Panc1 (cell line): ENCODE measurements at regions of chr9 and their contacts with region 1.

Region 1: GRCh38 chr9:94681508-94681907 is 42.2 kb upstream of the FBP1 start:
- DNase-seq: no peak
- ATAC-seq: peak; percentile 98
- H3K4me3 ChIP-seq: no peak overlapping the region
- H3K27ac ChIP-seq: peak overlapping the region; percentile 55; the same call in 1 of the 2 replicates
- H3K4me1 ChIP-seq: 0 out of 2 replicates have a peak, but pooled peaks cover 2% of the 10 kb centered on the region
- H3K27me3 ChIP-seq: no peaks in the 10 kb centered on the region
- CTCF ChIP-seq: peak; percentile 74

Region 2: DNA sequence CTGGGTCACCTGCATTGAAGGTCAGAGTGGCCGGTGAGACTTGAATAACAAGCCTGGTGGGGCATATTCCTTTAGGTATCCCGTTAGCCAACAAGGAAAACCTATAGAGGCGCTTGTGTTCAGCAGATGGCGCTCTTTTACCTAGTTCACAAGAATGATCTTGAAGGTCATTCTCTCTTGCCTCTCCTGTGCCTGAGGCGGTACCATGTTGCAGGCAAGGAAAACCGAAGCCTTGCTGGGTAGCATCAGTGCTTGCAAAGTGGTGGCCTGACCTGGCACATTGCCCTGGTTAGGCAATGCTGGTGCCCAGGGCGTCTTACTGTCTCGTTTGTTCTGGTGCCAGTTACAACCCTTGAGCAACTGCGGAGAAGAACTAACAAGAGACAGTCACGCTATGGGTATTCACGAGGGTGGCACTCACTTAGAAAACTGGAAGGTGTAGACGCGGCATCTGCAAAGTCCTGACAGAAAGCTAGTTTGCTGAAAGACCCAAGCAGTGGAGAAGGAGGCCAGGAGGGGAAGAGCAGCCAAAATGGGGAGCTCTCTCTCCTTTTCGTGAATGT is 101.7 kb after region 1 on chr9:
- CTCF ChIA-PET with region 1: no interaction called
- POLR2A ChIA-PET with region 1: interaction called, 3 read pairs
- in situ Hi-C with region 1: no loop called
- intact Hi-C with region 1: loop called (anchors 10 kb)
- DNase-seq: peak; percentile 64
- ATAC-seq: peak; percentile 99
- H3K4me3 ChIP-seq: no peak overlapping the region; a peak in 1 of 4 replicates
- H3K27ac ChIP-seq: peak overlapping the region; percentile 85
- H3K4me1 ChIP-seq: peaks cover 23% of the 10 kb centered on the region
- H3K27me3 ChIP-seq: no peaks in the 10 kb centered on the region
- CTCF ChIP-seq: peak; percentile 74

Region 3: DNA sequence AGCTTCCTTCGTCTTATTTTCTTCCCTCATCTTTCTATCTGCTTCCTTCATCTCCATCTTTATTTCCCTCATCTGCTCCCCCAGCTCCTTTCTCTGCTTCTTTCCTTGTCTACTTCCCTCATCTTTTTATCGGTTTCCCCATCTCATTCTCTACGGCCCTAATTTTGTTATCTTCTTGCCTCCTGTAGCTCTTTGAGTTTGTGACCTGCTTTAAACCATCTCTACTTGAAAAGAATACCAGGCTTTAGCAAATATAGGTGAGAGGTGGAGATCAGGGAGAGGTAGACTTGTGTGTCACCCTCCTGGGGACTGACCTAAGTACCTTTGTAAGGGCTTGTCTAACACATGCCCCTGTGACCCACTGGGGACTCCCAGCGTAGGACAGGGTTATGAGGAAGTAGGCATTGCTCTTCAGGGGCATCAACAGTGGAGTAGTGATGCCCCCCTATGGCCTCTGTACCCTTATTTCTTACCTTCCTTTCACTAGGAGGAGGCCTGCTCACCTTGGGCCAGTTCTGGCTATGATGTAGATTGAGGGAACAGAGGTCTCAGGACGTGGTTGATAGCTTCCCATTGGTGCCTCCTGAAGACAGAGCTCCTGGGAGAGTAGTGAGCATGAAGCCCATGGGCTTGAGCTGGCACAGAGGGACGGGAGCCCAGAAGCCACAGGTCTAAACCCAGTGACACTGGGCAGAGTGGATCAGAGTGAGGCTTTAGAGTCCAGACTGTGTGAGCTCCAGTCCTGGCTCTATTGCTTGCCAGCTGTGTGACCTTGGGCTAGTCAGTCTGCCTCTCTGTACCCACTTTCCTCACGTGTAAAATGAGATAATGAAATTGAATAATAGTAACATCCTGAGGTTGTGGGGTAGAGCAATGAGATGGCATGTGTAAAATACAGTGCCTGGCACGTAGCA is 236.6 kb after region 1 on chr9:
- CTCF ChIA-PET with region 1: interaction called, 10 read pairs
- POLR2A ChIA-PET with region 1: no interaction called
- in situ Hi-C with region 1: no loop called
- intact Hi-C with region 1: no loop called
- DNase-seq: no peak
- ATAC-seq: no peak
- H3K4me3 ChIP-seq: no peak overlapping the region
- H3K27ac ChIP-seq: peak overlapping the region; percentile 98
- H3K4me1 ChIP-seq: peaks cover 87% of the 10 kb centered on the region
- H3K27me3 ChIP-seq: no peaks in the 10 kb centered on the region
- CTCF ChIP-seq: no peak

Region 4: DNA sequence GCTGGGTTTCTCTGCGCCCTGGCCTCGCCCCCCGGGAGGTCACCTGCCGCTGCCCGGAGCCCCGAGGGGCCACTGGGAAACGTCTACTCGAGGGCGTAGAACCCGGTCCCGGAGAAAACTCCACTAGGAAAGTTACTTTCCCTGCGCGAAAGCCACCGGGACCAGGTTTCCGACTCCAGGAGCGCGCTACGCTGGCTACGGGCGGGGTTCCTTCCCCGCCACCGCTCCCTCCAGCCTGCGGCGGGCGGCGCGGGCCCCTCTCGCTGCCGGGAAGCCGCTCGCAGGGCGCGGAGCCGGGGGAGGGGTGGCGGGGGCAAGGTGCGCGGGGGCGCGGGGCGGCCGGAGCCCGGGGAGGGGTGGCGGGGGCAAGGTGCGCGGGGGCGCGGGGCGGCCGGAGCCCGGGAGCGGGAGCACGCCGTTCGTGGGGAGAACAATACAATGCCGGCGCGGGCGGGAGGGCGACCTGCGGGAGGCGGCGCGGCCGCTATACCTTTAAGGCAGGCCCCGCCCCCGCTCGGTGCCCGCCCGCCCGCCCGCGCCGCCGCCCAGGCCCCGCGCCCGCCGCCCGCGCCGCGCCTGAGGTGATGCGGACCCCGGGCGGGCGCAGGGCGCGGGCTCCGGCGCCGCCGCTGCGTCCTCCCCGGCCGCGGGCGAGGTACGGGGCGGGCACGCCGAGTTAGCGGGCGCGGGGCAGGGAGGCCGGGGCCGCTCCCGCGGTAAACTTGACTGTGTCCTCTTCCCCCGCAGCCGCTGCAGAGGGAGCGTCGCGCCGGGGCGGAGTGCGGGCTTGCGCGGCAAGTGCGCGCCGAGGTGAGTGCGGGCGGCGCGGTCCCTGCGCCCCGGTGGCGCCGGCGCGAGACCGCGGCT is 323.1 kb after region 1 on chr9:
- CTCF ChIA-PET with region 1: no interaction called
- POLR2A ChIA-PET with region 1: no interaction called
- in situ Hi-C with region 1: no loop called
- intact Hi-C with region 1: loop called (anchors 5 kb)
- DNase-seq: no peak
- ATAC-seq: peak; percentile 87
- H3K4me3 ChIP-seq: peak overlapping the region; percentile 71
- H3K27ac ChIP-seq: peak overlapping the region; percentile 92
- H3K4me1 ChIP-seq: peaks cover 19% of the 10 kb centered on the region
- H3K27me3 ChIP-seq: no peaks in the 10 kb centered on the region
- CTCF ChIP-seq: no peak